Dorsolateral prefrontal cortex (tissue), 120 donors: ENCODE measurements at regions of chr14 and their contacts with region 1.

Region 1: DNA sequence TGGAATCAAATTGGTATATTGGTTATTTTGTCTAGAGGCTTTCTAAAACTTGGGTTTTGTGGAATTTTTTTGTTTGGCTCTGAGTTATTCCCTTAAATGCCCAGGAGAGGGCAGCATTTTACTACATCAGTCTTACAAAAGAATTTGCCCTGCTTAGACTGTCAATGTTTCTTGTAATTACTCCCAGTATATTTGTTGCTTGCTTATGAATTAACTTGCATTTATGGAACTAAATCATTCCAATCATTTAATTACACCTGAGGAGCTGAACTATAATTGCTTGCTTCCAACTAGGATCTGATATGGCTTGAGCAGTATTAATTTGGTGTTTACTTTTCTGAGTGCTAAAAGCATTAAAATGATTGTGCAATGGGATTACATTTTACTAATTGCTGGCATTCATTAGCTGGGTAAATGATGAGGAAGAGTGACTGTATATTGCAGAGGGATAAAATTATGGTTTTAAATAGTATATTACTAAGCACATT is 48.7 kb downstream of the MIPOL1 start:
- DNase-seq: no peak
- H3K4me3 ChIP-seq: no peak overlapping the region
- H3K27ac ChIP-seq: no peak overlapping the region
- H3K27me3 ChIP-seq: no peaks in the 10 kb centered on the region
- CTCF ChIP-seq: peak; percentile 62 to 94 (median 83)

Region 2: DNA sequence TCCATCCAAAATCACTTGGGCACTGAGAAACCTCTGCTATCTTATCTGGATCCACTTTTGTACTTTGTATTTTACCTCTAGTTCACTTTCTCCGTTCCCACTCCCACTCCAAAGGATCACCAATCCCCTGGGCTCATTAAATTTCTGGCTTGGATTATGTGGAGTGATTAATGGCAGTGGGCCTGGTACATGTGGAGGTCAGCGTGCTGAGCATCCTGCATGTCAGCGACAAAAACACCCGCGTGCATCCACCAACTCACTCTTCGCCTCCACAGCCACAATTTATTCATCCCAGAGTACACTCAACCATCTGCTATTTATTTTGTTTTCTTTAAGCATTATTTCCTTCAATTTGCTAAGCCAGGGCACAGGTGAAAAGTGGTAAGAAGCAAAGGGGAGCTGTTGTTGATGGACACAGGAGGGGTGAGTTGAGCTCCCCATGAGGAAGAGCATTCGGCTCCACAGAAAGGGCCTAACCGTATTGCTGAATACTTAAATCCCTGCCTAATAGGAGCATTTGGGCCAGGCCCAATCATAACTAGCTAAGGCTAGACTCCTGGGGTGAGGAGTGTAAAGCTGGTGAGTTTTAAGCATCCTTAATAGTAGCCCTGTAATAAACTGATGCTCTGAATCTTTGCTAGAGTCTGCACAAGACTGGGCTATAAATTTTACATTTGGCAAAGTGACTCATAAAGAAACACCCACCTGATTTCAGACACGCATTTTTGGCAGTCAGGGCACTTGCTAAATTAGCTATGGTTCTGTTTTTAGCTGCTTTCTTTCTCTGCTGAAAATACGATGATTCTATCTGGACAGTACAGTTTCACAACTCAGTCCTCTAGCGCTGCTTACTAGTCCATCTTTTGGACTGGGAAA is 211.8 kb before region 1 on chr14:
- intact Hi-C with region 1: no loop called
- DNase-seq: peak in 2 of 10 donors; percentile 10 to 51
- H3K4me3 ChIP-seq: no peak overlapping the region
- H3K27ac ChIP-seq: no peak overlapping the region
- H3K27me3 ChIP-seq: peaks cover 0 to 2% (median 0%) of the 10 kb centered on the region in 45 donors
- CTCF ChIP-seq: no peak

Region 3: DNA sequence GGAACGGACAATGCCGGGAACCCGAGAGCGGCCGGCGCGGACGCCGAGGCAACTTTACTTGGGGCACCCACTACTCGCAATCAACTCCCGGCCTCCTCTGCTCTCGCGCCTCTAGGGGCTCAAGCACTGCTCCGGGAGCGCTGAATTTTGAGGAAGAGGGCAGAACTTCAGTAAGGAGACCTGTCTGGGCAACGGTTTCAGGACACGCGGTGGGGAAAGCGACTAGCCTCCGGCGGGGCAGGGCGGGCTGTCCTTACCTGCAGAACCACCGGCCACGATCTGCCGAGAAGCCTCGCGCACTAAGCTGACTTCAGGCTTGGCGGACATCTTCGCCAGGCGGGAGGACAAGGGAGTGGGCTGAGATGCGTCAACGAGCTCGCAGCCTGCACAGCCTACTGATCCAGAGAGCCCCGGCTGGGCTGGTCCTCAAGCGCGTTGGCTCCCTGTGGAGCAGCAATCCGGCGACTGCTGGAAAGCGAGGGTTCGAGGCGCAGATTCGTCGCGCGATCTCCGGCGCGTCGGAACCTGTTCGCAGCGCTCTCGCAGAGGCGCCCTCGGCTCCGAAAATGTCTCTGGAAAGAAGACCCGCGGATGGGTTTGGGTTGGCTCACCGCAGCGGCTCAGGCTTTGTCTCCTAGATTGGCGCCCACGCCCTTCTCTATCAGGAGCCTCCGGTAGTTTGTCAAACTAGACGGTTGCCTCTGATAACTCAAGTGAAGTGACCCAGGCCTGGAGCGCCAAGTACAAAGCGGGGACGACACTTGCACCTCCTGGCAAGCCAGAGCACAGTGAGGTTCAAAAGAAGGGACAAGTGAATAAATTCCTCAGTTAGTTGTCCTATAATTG is 74.2 kb before region 1 on chr14 and contains the start of gene SLC25A21:
- intact Hi-C with region 1: no loop called
- DNase-seq: peak; percentile 27 to 86 (median 74)
- H3K4me3 ChIP-seq: peak within 1 kb of the TSS; percentile 54 to 91 (median 77)
- H3K27ac ChIP-seq: peak within 1 kb of the TSS in 58 of 59 donors; percentile 23 to 91 (median 78)
- H3K27me3 ChIP-seq: no peaks in the 10 kb centered on the region
- CTCF ChIP-seq: peak in 36 of 56 donors; percentile 8 to 60 (median 30)
- total RNA-seq, gene SLC25A21: 0.16 to 2.6 (median 0.75) TPM in 85 of 120 experiments, not detected in the others

Region 4: DNA sequence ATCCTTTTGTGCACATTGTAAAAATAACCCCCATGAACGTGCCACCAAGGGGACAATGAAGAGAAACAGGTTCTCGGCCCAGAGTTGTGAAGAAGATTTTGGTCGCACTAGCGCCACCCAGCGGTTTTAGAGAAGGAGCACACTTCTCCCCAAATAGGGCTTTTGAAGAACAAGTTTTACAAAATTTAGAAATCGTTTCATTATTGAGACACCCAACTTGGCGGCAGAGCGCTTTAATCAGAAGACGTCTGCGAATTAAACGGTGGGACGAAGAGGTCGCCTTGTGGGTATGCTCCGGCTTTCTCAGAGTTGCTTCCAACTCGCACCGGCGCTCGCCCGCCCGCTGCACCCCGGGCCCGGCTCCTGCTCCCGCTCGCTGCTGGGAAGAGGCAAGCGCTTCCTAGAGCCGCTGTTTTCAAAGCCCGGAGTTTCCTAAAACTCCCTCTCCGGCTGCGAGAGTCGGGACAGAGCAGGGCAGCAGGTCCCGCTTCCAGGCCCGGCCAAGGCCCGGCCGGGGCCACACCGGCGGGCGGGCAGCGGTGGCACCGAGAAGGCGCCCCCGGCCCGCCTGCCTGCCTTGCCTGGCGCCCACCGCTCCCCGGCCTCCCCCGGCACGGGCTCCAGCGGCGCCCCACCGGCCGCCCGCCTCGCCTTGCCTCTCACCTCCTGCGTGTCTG is 347.9 kb after region 1 on chr14:
- intact Hi-C with region 1: loop called in 1 of 2 experiments (anchors 10 kb)
- DNase-seq: no peak
- H3K4me3 ChIP-seq: peak overlapping the region in 47 of 59 donors; percentile 3 to 59 (median 36)
- H3K27ac ChIP-seq: no peak overlapping the region
- H3K27me3 ChIP-seq: peaks cover 25 to 99% (median 97%) of the 10 kb centered on the region in 45 donors
- CTCF ChIP-seq: peak in 54 of 56 donors; percentile 22 to 69 (median 51)